Uterus (tissue), 4 donors: ENCODE measurements at regions of chr11 and their contacts with region 1.

Region 1: DNA sequence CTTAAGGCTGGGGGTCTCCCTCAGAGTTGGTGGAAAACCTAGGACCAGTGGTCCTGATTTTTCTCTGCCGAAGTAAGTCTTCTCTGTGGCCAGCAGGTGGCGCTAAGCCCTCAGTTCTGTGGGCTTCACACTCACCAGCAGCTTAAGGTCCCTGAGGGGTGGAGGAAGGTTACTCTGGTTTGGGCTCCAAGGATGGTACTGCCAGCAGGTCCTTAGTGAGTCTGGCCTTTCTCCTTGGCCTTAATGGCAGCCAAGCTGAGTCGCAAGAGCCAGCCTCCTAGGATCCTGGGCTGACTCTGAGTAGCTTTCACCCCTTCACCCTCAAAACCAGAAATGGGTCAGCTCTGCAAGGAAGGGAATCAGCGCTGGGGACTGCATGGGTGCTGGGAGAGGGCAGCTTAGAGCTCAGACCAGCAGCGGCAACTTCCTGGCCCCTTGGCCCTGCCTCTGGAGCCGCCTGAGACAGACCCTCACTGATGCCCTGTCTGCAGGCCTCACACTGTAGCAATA is 4.4 kb downstream of the KCNJ11 start:
- DNase-seq: peak; percentile 63 to 75
- H3K4me3 ChIP-seq: no peak overlapping the region
- H3K27ac ChIP-seq: no peak overlapping the region
- H3K4me1 ChIP-seq: peaks cover 0 to 5% of the 10 kb centered on the region in 2 donors
- H3K27me3 ChIP-seq: no peaks in the 10 kb centered on the region
- CTCF ChIP-seq: peak; percentile 82 to 88 (median 86)
- POLR2A ChIP-seq: no peak

Region 2: DNA sequence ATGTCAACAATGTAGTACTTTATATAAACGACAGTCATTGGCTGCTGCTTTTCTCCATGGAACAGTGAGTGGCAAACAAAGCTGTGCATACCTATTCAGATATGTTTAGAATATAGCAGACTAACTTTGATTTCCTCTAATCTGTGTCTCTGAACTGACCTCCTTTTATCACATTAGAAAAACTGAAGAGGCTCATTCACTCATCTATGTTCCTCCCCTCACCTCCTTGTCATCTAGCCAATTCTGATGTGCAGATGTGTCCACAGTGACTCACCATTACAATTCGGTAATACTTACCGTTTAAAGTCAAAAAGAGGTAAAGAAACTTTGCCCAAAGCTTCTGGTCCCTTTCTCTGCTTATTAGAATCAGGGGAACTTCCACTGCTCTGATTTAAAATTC is 255.1 kb before region 1 on chr11:
- intact Hi-C with region 1: no loop called
- DNase-seq: no peak
- H3K4me3 ChIP-seq: no peak overlapping the region
- H3K27ac ChIP-seq: no peak overlapping the region
- H3K4me1 ChIP-seq: no peaks in the 10 kb centered on the region
- H3K27me3 ChIP-seq: no peaks in the 10 kb centered on the region
- CTCF ChIP-seq: no peak
- POLR2A ChIP-seq: no peak

Region 3: GRCh38 chr11:17504330-17505107 is 120.5 kb after region 1 on chr11:
- intact Hi-C with region 1: loop called (anchors 5 kb)
- DNase-seq: peak; percentile 62 to 68
- H3K4me3 ChIP-seq: no peak overlapping the region
- H3K27ac ChIP-seq: no peak overlapping the region
- H3K4me1 ChIP-seq: no peaks in the 10 kb centered on the region
- H3K27me3 ChIP-seq: no peaks in the 10 kb centered on the region
- CTCF ChIP-seq: peak; percentile 76 to 87 (median 85)
- POLR2A ChIP-seq: no peak